PC-9 (cell line): ENCODE measurements at regions of chr19 and their contacts with region 1.

Region 1: GRCh38 chr19:55312621-55313512 is 12.3 kb downstream of the TMEM150B start:
- DNase-seq: no peak
- H3K4me3 ChIP-seq: no peak overlapping the region
- H3K27ac ChIP-seq: no peak overlapping the region
- H3K4me1 ChIP-seq: no peaks in the 10 kb centered on the region
- H3K27me3 ChIP-seq: no peaks in the 10 kb centered on the region
- CTCF ChIP-seq: no peak

Region 2: DNA sequence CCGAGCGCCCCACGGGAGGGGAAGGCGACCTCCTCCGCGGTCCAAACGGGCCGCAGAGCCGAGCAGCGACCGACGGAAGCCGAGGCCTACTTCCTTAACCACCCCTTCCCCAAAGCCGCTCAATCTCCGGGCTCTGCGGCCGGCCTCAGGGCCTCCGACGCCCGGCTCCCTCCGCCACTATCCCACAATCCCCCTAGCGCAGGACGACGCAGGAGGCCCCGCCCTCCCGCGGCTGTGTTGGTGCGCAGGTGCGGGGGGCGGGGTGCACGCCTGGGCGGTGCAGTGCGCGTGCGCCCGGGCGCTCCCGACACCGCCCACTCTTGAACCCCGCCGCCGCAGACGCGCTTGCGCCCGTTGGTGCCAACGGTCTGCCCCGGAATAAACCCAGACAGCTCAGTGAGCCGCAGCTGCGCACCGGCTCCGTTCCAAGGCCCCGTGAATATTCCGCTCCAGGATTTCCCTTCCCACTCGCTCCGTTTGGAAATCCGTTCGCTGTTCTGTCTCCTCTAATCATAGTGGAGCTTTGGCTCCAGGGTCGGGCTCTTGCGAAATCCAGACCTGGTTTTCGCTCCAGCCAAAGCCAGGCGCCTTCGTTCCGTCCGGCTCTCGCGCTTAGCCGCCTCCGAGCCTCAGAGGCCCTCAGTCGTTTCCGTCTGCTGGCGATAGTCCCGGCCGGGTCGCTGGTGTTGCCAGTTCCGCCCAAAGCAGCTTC is 53.9 kb before region 1 on chr19 and contains the start of gene PPP6R1:
- CTCF ChIA-PET with region 1: no interaction called
- POLR2A ChIA-PET with region 1: no interaction called
- intact Hi-C with region 1: no loop called
- DNase-seq: peak; percentile 99 to 100
- H3K4me3 ChIP-seq: peak within 1 kb of the TSS; percentile 77
- H3K27ac ChIP-seq: peak within 1 kb of the TSS; percentile 86
- H3K4me1 ChIP-seq: peaks cover 42% of the 10 kb centered on the region
- H3K27me3 ChIP-seq: no peaks in the 10 kb centered on the region
- CTCF ChIP-seq: no peak
- total RNA-seq, gene PPP6R1: 136 and 159 TPM in 2 replicates

Region 3: GRCh38 chr19:55353803-55354697 is 41.2 kb after region 1 on chr19:
- CTCF ChIA-PET with region 1: no interaction called
- POLR2A ChIA-PET with region 1: interaction called, 10 read pairs
- intact Hi-C with region 1: no loop called
- DNase-seq: peak; percentile 52 to 85
- H3K4me3 ChIP-seq: peak overlapping the region; percentile 72
- H3K27ac ChIP-seq: no peak overlapping the region
- H3K4me1 ChIP-seq: peaks cover 47% of the 10 kb centered on the region
- H3K27me3 ChIP-seq: peaks cover 5% of the 10 kb centered on the region
- CTCF ChIP-seq: no peak